ENCODE measurements at regions of chr12 and their contacts with region 1.

Region 1: DNA sequence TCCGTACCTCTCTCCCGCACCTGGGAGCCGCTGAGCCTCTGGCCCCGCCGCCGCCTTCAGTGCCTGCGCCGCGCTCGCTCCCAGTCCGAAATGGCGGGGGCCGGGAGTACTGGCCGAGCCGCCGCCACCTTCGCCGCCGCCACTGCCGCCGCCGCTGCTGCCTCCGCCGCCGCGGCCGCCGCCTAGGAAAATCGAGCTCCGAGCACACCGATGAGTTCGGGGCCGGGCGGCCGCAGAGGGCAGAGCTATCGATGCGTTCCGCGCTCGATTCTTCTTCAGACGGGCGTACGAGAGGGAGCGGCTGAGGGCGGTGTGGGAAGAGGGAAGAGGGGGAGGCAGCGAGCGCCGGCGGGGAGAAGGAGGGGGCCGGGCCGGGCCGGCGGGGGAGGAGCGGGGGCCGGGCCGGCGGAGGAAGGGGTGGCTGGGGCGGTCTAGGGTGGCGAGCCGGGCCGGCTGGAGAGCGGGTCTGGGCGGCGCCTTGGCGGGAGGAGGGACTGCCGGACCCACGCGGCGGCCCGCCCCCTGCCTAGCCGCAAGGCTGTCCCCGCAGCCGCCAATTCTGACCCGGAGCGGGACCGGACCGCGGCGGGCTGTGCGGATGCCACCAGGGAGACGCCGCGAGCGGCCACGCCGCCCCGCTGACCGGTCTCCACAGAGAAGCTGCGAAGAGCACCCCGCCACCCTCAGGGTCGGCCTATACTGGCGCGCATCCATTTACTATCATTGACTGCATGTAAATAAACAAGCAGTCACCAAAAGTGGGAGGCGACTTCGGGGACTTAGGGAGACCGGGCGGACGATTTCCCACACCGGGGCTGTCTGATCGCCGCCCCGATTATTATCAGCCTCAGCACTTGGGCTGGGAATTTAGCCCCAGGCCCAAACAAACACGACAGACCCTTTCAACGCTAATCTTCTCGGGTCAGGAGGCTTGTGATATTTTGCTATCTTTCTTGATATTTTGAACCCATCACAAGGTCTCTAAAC is at the start of gene KRAS:
- DNase-seq: peak; percentile 89
- H3K4me3 Mint-ChIP-seq: peak within 1 kb of the TSS; percentile 90
- H3K27ac Mint-ChIP-seq: peak within 1 kb of the TSS; percentile 96
- H3K4me1 Mint-ChIP-seq: peaks cover 45% of the 10 kb centered on the region
- H3K27me3 Mint-ChIP-seq: peaks cover 10% of the 10 kb centered on the region
- total RNA-seq, gene KRAS: 43.1 and 43.3 TPM in 2 replicates

Region 2: GRCh38 chr12:24608637-24609285 is 642.3 kb before region 1 on chr12:
- intact Hi-C with region 1: no loop called
- DNase-seq: no peak
- H3K4me3 Mint-ChIP-seq: no peak overlapping the region
- H3K27ac Mint-ChIP-seq: no peak overlapping the region
- H3K4me1 Mint-ChIP-seq: no peaks in the 10 kb centered on the region
- H3K27me3 Mint-ChIP-seq: no peaks in the 10 kb centered on the region

Region 3: GRCh38 chr12:25195056-25195971 is 55.7 kb before region 1 on chr12 and contains the starts of genes DNAI7 and ETFRF1:
- intact Hi-C with region 1: loop called (anchors 1 kb)
- DNase-seq: peak; percentile 92
- H3K4me3 Mint-ChIP-seq: peak within 1 kb of the TSS; percentile 98
- H3K27ac Mint-ChIP-seq: peak within 1 kb of the TSS; percentile 95
- H3K4me1 Mint-ChIP-seq: peaks cover 23% of the 10 kb centered on the region
- H3K27me3 Mint-ChIP-seq: peaks cover 2% of the 10 kb centered on the region
- total RNA-seq, gene DNAI7: 0.23 TPM in 1 of 2 replicates, not detected in the other
- total RNA-seq, gene ETFRF1: 9.7 and 10.4 TPM in 2 replicates

Region 4: GRCh38 chr12:25208554-25208953 is 42.5 kb before region 1 on chr12:
- intact Hi-C with region 1: loop called (anchors 5 kb)
- DNase-seq: no peak
- H3K4me3 Mint-ChIP-seq: no peak overlapping the region
- H3K27ac Mint-ChIP-seq: peak overlapping the region; percentile 29
- H3K4me1 Mint-ChIP-seq: no peaks in the 10 kb centered on the region
- H3K27me3 Mint-ChIP-seq: no peaks in the 10 kb centered on the region

Region 5: DNA sequence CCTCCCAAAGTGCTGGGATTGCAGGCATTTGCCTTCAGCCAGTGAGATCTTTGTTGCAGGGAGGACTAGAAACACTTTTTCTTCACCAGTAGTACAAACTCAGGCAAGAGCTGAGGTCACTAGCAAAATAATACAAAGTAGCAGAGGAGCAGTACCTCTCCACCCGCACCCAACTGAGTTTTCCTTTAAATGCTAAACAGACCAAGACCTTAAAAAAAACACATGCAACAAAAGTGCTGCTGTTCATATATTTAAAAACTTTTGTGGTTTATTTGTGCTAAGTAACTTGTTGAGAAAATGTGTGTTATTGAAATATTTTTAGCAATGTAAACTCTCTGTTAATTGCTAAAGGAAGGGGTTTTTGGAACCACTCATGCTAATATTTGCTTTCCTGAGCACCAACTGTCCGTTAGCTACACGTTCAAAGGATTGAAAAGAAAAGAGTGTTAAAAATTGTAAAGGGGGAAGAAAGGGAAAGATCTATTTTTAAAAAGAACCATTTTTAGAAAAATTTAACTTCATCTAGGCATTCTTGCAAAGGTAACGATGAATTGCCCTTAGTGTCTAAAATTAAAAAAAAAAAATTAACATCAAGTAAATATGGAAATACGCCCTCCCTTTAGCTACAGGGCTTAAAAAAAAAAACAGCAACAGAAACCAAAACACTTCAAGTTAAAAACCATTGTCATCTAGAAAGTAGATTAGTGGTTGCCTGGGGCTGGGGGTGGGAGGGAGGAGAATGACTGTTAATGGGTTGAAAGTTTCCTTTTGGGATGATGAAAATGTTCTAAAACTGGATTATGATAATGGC is 113.7 kb after region 1 on chr12:
- intact Hi-C with region 1: loop called (anchors 1 kb)
- DNase-seq: no peak
- H3K4me3 Mint-ChIP-seq: peak overlapping the region; percentile 36
- H3K27ac Mint-ChIP-seq: peak overlapping the region; percentile 94
- H3K4me1 Mint-ChIP-seq: peaks cover 45% of the 10 kb centered on the region
- H3K27me3 Mint-ChIP-seq: peaks cover 5% of the 10 kb centered on the region

Region 6: DNA sequence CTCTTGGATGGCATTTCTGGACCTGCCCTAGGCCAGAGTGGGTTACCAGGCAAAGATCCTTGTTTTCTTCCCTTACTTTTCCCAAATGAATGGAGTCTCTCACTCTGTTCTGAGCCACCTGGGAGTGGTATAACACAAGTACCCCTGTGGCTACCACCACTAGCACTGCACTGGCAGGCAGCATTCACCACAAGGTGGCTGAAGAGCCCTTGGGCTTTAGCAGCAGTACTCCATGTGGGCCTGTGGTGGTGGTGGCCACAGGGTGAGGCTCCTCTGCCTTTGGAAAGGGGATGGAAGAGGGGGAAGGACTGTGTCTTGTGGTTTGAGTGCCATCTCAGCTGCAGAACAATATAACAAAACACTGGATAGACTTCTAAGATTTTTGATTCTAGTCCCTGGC is 340.1 kb after region 1 on chr12:
- intact Hi-C with region 1: loop called (anchors 10 kb)
- DNase-seq: no peak
- H3K4me3 Mint-ChIP-seq: no peak overlapping the region
- H3K27ac Mint-ChIP-seq: peak overlapping the region; percentile 24
- H3K4me1 Mint-ChIP-seq: peaks cover 58% of the 10 kb centered on the region
- H3K27me3 Mint-ChIP-seq: no peaks in the 10 kb centered on the region